Activated CD4-positive, alpha-beta T cell treated with anti-CD3 and anti-CD28 coated beads for 36 hours (primary cell): ENCODE measurements at regions of chr3 and their contacts with region 1.

Region 1: GRCh38 chr3:20511863-20512505 is 326.0 kb upstream of the SGO1 start:
- DNase-seq: no peak
- ATAC-seq: peak; percentile 65
- H3K4me3 Mint-ChIP-seq: no peak overlapping the region
- H3K27ac Mint-ChIP-seq: no peak overlapping the region
- H3K4me1 Mint-ChIP-seq: no peaks in the 10 kb centered on the region
- H3K27me3 Mint-ChIP-seq: no peaks in the 10 kb centered on the region

Region 2: DNA sequence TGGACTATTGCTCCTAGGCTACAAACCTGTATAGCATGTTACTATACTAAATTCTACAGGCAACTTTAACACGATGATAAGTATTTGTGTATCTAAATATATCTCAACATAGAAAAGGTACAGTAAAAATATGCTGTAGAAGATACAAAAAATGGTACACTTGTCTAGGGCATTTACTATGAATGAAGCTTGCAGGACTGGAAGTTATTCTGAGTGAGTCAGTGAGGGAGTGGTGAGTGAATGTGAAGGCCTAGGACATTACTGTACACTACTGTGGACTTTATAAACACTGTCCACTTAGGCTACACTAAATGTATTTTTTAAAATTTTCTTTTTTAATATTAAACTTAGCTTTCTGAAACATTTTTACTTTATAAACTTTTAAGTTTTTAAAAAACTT is 185.4 kb before region 1 on chr3:
- CTCF ChIA-PET with region 1: no interaction called
- POLR2A ChIA-PET with region 1: no interaction called
- intact Hi-C with region 1: no loop called
- DNase-seq: no peak
- ATAC-seq: no peak
- H3K4me3 Mint-ChIP-seq: no peak overlapping the region
- H3K27ac Mint-ChIP-seq: no peak overlapping the region
- H3K4me1 Mint-ChIP-seq: no peaks in the 10 kb centered on the region
- H3K27me3 Mint-ChIP-seq: no peaks in the 10 kb centered on the region

Region 3: GRCh38 chr3:20975188-20975651 is 463.2 kb after region 1 on chr3:
- CTCF ChIA-PET with region 1: no interaction called
- POLR2A ChIA-PET with region 1: no interaction called
- intact Hi-C with region 1: no loop called
- DNase-seq: no peak
- ATAC-seq: no peak
- H3K4me3 Mint-ChIP-seq: no peak overlapping the region
- H3K27ac Mint-ChIP-seq: no peak overlapping the region
- H3K4me1 Mint-ChIP-seq: no peaks in the 10 kb centered on the region
- H3K27me3 Mint-ChIP-seq: no peaks in the 10 kb centered on the region

Region 4: GRCh38 chr3:21484057-21484827 is 972.3 kb after region 1 on chr3:
- CTCF ChIA-PET with region 1: no interaction called
- POLR2A ChIA-PET with region 1: no interaction called
- intact Hi-C with region 1: loop called in 1 of 2 experiments (anchors 2 kb)
- DNase-seq: peak; percentile 29
- ATAC-seq: no peak
- H3K4me3 Mint-ChIP-seq: no peak overlapping the region
- H3K27ac Mint-ChIP-seq: no peak overlapping the region
- H3K4me1 Mint-ChIP-seq: no peaks in the 10 kb centered on the region
- H3K27me3 Mint-ChIP-seq: no peaks in the 10 kb centered on the region

Region 5: DNA sequence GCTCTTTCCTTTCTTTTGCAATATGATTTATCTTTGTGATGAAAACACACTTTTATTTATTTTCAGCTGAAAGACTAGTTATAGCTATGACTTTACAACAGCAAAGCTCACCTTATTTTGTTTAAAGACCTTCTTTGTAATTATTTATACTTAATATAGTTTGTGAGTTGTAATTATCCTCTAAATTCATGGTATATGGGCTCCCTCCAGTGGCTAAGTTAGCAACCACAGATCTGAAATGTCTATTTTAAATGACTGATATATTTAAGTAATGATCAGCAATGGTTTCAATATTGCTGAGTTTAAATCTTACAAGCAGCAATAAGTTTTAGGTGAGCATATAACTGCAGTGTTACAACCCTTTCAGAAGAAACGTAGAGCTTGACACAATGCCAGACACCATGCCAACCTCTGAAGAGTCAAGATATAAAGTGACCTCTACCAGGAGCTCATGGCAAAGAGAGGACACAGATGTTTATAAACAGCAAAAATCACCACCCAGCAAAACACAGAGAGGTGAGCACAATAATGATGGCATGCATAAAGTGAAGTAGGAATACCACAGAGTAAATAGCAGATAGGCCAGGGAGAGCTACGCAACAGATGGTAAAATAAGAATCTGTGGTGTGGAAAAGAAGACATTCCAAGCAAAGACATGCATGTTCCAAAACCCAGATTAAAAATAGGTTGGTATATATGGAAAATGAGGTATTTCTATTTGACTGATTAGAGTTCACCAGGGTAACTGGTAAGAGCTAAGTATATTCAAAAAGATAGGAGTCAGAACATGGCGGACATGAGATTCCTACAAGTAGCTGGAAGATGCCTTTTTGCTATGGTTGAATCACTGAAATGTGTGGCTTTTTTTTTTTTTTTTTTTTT is 1382.7 kb after region 1 on chr3:
- CTCF ChIA-PET with region 1: no interaction called
- POLR2A ChIA-PET with region 1: no interaction called
- intact Hi-C with region 1: loop called in 1 of 2 experiments (anchors 10 kb)
- DNase-seq: no peak
- ATAC-seq: no peak
- H3K4me3 Mint-ChIP-seq: no peak overlapping the region
- H3K27ac Mint-ChIP-seq: no peak overlapping the region
- H3K4me1 Mint-ChIP-seq: no peaks in the 10 kb centered on the region
- H3K27me3 Mint-ChIP-seq: no peaks in the 10 kb centered on the region

Region 6: DNA sequence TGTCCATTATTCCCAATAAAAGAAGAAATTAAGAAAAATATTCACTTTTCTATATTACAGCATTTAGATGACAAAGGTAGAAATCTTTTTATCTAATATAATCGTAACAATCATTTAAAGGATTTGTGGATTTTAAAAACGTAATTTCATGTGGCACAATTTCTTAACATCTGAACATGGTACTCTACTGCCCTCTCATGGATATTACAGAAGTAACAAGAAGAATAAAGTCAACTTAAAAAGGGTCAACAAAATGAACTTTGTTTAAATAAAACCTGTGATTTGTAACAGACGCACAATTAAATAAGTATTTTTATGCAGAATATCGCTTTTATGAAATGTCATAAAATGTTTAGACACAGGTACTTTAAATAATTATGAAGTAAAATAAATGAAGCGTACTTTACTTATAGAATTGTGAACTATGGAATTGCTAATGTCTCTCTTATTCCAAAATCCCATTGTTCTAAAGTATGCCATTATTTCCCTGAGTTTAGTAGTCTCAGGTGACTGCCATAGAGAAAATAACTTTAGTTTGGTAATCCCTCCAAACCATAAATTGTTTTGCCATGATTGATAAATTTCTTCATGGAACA is 1605.9 kb after region 1 on chr3:
- CTCF ChIA-PET with region 1: no interaction called
- POLR2A ChIA-PET with region 1: no interaction called
- intact Hi-C with region 1: loop called in 1 of 2 experiments (anchors 2 kb)
- DNase-seq: no peak
- ATAC-seq: no peak
- H3K4me3 Mint-ChIP-seq: no peak overlapping the region
- H3K27ac Mint-ChIP-seq: no peak overlapping the region
- H3K4me1 Mint-ChIP-seq: no peaks in the 10 kb centered on the region
- H3K27me3 Mint-ChIP-seq: no peaks in the 10 kb centered on the region